ENCODE measurements at regions of chr9 and their contacts with region 1.

Region 1: DNA sequence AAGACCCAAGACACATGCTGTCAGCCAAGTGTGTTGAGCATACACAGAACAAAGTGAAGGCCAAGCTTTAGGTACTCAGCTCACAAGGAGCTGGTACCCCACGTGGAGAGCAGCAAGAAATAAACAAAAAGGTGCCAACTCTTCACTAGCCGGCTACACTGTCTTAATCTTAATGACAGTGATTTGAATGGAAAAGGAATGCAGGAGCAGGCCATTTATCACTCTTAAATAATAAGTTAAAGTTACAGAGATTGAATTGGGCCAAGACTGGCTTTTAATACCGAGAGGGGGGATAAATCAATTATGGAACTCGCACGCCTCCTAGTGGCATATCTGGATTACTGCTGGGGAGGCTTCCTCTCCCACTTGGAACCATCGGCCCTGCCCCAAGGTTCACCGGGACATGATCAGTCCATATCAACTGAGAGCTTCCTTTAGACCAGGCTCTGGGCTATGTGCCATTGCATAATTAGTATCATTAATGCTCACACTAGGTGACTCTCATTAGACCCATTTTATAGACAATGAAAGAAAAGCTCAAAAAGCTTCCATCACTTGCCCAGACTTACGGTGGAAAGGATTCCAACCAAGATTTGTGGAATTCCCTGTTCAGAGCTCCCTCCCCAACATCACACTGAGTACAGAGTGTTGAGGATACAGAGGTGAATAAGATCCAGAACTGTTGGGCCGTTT is 94.0 kb downstream of the ACTL7B start:
- DNase-seq: peak; percentile 21 to 71
- H3K4me3 ChIP-seq: no peak overlapping the region
- H3K27ac ChIP-seq: no peak overlapping the region
- H3K4me1 ChIP-seq: 0 out of 7 replicates have a peak, but pooled peaks cover 0 to 1% (median 0%) of the 10 kb centered on the region in 4 experiments
- H3K27me3 ChIP-seq: no peaks in the 10 kb centered on the region
- CTCF ChIP-seq: peak; percentile 71 to 84 (median 82)
- EP300 ChIP-seq: no peak
- POLR2A ChIP-seq: no peak
- RAD21 ChIP-seq: peak; percentile 90 to 92

Region 2: GRCh38 chr9:108586456-108586855 is 175.3 kb before region 1 on chr9:
- CTCF ChIA-PET with region 1: no interaction called
- POLR2A ChIA-PET with region 1: no interaction called
- DNase-seq: no peak
- H3K4me3 ChIP-seq: no peak overlapping the region
- H3K27ac ChIP-seq: no peak overlapping the region
- H3K4me1 ChIP-seq: peaks cover 0 to 7% (median 0%) of the 10 kb centered on the region in 4 experiments; a peak in 1 of 7 replicates
- H3K27me3 ChIP-seq: no peaks in the 10 kb centered on the region
- CTCF ChIP-seq: no peak
- EP300 ChIP-seq: no peak
- POLR2A ChIP-seq: no peak
- RAD21 ChIP-seq: no peak

Region 3: DNA sequence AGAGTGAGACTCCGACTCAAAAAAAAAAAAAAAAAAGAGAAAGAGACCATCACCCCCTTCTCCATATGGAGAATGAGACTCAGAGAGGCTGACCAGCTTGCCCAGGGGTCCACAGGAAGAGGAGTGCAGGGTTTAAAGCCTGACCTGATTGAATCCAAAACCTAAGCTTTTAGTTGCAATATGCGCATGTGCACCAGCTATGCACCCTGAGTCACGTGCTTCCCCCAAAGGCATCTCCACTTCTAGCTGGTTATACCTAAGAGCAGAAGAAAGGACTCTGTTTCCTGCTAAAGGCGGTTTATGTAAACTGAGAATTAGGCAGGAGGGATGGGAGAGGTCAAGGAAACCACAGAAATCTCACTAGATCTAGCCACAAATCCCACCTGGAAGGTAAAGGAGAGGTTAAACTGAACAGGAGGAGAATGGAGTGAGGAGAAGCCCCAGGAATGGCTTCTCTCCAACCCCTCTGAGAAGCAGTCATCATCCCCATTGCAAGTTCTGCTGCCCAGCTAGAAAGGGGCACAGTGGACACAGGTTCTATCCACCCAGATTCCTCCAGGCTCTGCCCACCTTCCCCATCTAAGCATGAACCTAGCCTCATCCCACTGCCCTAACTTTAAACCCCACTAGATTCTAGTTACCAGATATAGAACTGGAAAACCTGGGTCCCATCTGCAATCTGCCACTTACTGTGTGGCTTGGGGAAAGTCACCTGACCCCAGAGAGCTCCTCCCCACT is 77.3 kb before region 1 on chr9:
- CTCF ChIA-PET with region 1: interaction called, 10 read pairs
- POLR2A ChIA-PET with region 1: no interaction called
- DNase-seq: no peak
- H3K4me3 ChIP-seq: no peak overlapping the region
- H3K27ac ChIP-seq: no peak overlapping the region
- H3K4me1 ChIP-seq: no peaks in the 10 kb centered on the region; a peak in 1 of 7 replicates
- H3K27me3 ChIP-seq: no peaks in the 10 kb centered on the region
- CTCF ChIP-seq: no peak
- EP300 ChIP-seq: no peak
- POLR2A ChIP-seq: no peak
- RAD21 ChIP-seq: no peak

Region 4: DNA sequence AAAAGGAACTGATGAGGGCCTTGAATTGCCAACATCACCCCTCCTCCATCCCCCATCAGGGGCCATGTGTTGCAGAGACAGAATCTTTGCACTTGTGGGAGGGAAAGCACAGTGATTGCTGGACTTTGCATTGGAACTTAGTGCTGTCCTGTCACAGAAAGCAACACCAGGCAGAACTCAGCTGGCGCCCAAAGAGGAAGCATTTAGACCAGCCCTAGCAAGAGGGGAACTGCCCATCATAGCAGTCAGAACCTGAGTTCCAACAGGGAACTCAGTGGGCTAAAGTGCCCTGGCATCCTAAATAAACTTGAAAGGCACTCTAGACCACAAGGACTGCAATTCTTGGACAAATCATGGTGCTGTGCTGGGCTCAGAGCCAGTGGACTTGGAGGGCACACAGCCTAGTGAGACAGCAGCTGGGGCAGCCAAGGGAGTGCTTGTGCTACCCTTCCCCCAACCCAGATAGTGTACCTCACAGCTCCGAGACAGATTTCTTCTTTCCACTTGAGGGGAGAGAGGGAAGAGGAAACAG is 34.2 kb before region 1 on chr9:
- CTCF ChIA-PET with region 1: interaction called, 10 read pairs
- POLR2A ChIA-PET with region 1: no interaction called
- DNase-seq: no peak
- H3K4me3 ChIP-seq: no peak overlapping the region
- H3K27ac ChIP-seq: no peak overlapping the region
- H3K4me1 ChIP-seq: no peaks in the 10 kb centered on the region
- H3K27me3 ChIP-seq: no peaks in the 10 kb centered on the region
- CTCF ChIP-seq: no peak
- EP300 ChIP-seq: no peak
- POLR2A ChIP-seq: no peak
- RAD21 ChIP-seq: no peak

Region 5: DNA sequence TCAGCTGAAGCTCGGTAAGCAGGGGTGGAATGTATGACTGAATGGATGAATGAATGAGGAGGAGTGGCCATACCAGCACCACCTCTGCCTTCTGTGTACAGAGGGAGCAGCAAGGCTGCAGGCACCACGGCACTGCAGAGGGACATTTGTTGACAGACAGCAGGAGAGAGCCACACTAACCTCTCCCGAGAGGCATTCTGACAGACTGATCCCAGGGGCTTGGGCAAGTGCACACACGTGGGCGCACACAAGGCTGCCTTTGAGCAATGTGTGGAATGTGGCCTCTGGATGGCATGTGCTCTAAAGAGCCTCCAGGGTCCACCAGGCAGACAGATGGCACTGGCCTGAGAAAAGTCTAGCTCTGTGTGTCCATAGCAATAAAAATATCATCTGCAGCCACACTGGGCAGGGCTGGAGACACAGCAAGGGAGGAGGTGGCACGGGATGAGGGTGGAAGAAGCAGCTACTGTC is 17.9 kb before region 1 on chr9:
- CTCF ChIA-PET with region 1: interaction called, 24 read pairs
- POLR2A ChIA-PET with region 1: no interaction called
- DNase-seq: no peak
- H3K4me3 ChIP-seq: no peak overlapping the region
- H3K27ac ChIP-seq: no peak overlapping the region
- H3K4me1 ChIP-seq: peaks cover 0 to 4% (median 0%) of the 10 kb centered on the region in 4 experiments; a peak in 1 of 7 replicates
- H3K27me3 ChIP-seq: no peaks in the 10 kb centered on the region
- CTCF ChIP-seq: no peak
- EP300 ChIP-seq: no peak
- POLR2A ChIP-seq: no peak
- RAD21 ChIP-seq: no peak

Region 6: GRCh38 chr9:108776920-108777645 is 15.3 kb after region 1 on chr9:
- CTCF ChIA-PET with region 1: interaction called, 14 read pairs
- POLR2A ChIA-PET with region 1: no interaction called
- DNase-seq: no peak
- H3K4me3 ChIP-seq: no peak overlapping the region
- H3K27ac ChIP-seq: no peak overlapping the region
- H3K4me1 ChIP-seq: peaks cover 0 to 15% (median 3%) of the 10 kb centered on the region in 4 experiments; a peak in 4 of 7 replicates
- H3K27me3 ChIP-seq: peaks cover 0 to 6% (median 1%) of the 10 kb centered on the region in 4 experiments; a peak in 2 of 7 replicates
- CTCF ChIP-seq: peak; percentile 44 to 64 (median 53)
- EP300 ChIP-seq: no peak
- POLR2A ChIP-seq: no peak
- RAD21 ChIP-seq: peak; percentile 48 to 53

Region 7: GRCh38 chr9:108800632-108801099 is 38.9 kb after region 1 on chr9:
- CTCF ChIA-PET with region 1: interaction called, 10 read pairs
- POLR2A ChIA-PET with region 1: no interaction called
- DNase-seq: no peak
- H3K4me3 ChIP-seq: no peak overlapping the region
- H3K27ac ChIP-seq: no peak overlapping the region
- H3K4me1 ChIP-seq: peaks cover 0 to 4% (median 1%) of the 10 kb centered on the region in 4 experiments; a peak in 2 of 7 replicates
- H3K27me3 ChIP-seq: no peaks in the 10 kb centered on the region
- CTCF ChIP-seq: no peak
- EP300 ChIP-seq: no peak
- POLR2A ChIP-seq: no peak
- RAD21 ChIP-seq: no peak